AG04450 (cell line): ENCODE measurements at regions of chr6 and their contacts with region 1.

Region 1: DNA sequence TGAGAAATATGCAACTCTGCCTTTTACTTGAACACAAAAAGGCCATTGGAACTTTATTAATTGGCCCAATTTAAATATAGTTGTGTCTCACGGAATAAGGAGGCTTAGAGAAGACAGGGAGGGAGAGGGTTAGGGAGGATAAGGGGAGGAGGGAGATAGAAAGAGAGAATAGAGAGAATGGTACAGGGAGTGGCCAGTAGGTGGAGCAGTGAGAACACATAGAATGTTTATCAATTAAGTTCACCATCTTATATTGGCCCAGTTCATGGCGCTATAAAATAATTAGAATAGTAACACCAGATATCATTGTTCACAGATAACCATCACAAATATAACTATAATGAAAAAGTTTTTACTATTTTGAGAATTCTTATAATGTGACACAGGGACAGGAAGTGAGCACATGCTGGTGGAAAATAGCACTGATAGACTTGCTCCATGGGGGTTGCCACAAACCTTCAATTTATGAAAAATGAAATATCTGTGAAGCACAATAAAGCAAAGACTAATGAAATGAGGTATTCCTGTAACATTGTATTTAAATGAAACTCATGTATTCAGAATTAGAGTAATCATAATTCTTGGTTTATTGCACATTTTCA is 374.1 kb upstream of the MANEA start:
- DNase-seq: peak; percentile 4
- H3K4me3 ChIP-seq: no peak overlapping the region
- H3K27ac ChIP-seq: no peak overlapping the region
- H3K27me3 ChIP-seq: no peaks in the 10 kb centered on the region
- CTCF ChIP-seq: peak; percentile 66

Region 2: GRCh38 chr6:95227351-95227750 is 24.1 kb after region 1 on chr6:
- CTCF ChIA-PET with region 1: interaction called, 10 read pairs
- POLR2A ChIA-PET with region 1: no interaction called
- DNase-seq: no peak
- H3K4me3 ChIP-seq: no peak overlapping the region
- H3K27ac ChIP-seq: no peak overlapping the region
- H3K27me3 ChIP-seq: no peaks in the 10 kb centered on the region
- CTCF ChIP-seq: no peak

Region 3: DNA sequence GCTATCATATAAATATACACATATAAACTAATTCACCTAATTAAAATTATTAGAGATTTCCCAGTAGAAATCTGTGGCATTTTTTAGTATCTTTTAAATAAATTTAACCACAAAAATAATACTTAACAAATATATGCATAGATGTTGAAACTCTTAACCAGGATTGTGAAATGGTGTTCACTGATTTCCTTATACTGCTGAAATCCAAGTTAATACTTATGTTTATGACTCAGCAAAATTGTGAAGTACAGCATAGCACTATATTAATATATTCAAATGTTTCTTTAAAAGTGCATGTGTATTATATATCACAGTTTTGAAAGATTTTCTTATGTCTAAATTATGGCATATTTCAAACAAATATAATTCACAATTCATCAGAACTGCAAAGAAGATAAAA is 45.9 kb after region 1 on chr6:
- CTCF ChIA-PET with region 1: interaction called, 21 read pairs
- POLR2A ChIA-PET with region 1: no interaction called
- DNase-seq: peak; percentile 6
- H3K4me3 ChIP-seq: no peak overlapping the region
- H3K27ac ChIP-seq: no peak overlapping the region
- H3K27me3 ChIP-seq: no peaks in the 10 kb centered on the region
- CTCF ChIP-seq: no peak

Region 4: GRCh38 chr6:95280690-95281273 is 77.5 kb after region 1 on chr6:
- CTCF ChIA-PET with region 1: interaction called, 25 read pairs
- POLR2A ChIA-PET with region 1: no interaction called
- DNase-seq: no peak
- H3K4me3 ChIP-seq: no peak overlapping the region
- H3K27ac ChIP-seq: no peak overlapping the region
- H3K27me3 ChIP-seq: no peaks in the 10 kb centered on the region
- CTCF ChIP-seq: peak; percentile 34